Right ventricle myocardium superior (tissue), 1 donor: ENCODE measurements at regions of chr1 and their contacts with region 1.

Region 1: DNA sequence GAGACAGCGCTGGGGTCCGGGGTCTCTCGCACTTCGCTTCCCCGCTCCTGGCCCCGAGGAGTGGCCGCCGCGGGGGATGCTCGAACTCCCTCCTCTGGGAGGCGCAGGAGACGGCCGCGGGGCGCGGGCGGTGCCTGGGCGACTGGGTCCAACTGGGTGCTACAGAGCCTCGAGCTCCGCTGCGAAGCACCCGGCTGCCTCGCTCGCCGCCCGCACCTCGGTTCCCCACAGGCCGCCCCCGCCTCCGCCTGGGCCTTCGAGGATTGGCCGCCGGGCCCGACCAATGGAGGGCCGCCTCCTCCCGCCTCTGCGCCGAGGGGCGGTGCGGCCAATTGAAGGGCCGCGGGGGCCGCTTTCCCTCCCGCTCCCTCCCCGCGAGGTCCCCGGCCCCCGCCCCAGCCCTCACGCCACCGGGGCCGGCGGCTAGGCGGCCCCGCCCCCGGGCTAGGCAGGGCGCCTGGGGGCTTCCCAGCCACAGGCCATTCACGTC is at the start of gene CNN3:
- DNase-seq: peak; percentile 94
- ATAC-seq: peak; percentile 93
- total RNA-seq, gene CNN3: 49.4 TPM

Region 2: DNA sequence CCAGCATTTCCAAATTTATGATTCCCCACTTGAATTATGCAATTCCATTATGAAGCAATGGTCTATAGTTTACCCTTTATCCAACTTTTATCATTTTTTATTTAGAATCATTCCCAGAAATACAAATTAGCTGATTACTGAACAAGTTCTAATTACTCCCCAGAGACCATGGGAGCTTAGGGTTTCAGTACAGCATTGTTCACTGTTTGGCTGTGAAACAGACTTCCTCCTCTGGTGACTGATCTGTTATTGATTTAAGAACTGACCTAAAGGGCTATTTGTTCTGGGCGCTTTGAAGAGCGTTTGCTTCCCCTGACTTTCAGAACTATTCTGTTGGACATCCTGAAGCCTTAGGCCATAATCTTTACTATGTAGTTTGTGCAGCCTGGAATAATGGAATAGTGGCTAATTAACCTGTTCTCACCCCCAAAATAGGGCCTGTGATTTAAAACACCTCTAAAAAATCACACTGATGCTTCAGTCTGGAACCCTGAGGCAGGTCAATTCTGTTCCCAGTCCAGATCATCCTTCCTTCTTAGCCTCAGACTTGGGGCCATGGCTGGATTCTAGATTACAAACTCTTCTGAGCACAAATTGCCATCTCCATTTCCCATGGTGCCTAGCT is 87.1 kb after region 1 on chr1:
- intact Hi-C with region 1: loop called (anchors 10 kb)
- DNase-seq: no peak
- ATAC-seq: peak; percentile 68

Region 3: GRCh38 chr1:95043141-95043980 is 116.4 kb after region 1 on chr1:
- intact Hi-C with region 1: loop called (anchors 2 kb)
- DNase-seq: peak; percentile 88
- ATAC-seq: peak; percentile 90

Region 4: GRCh38 chr1:95116580-95117206 is 189.7 kb after region 1 on chr1:
- intact Hi-C with region 1: no loop called
- DNase-seq: peak; percentile 70
- ATAC-seq: peak; percentile 83